Spleen (tissue), 13 donors: ENCODE measurements at regions of chr15 and their contacts with region 1.

Region 1: GRCh38 chr15:85296615-85297402 is 83.6 kb upstream of the AKAP13 start:
- DNase-seq: peak; percentile 81
- H3K4me3 ChIP-seq: peak overlapping the region in 1 of 8 donors; percentile 50
- H3K27ac ChIP-seq: peak overlapping the region in 2 of 8 donors; percentile 14 to 37
- H3K4me1 ChIP-seq: peaks cover 0 to 12% (median 10%) of the 10 kb centered on the region in 6 donors
- H3K27me3 ChIP-seq: no peaks in the 10 kb centered on the region
- CTCF ChIP-seq: peak; percentile 32 to 81 (median 71)
- POLR2A ChIP-seq: no peak

Region 2: GRCh38 chr15:85504749-85505676 is 208.2 kb after region 1 on chr15:
- intact Hi-C with region 1: loop called (anchors 10 kb)
- DNase-seq: no peak
- H3K4me3 ChIP-seq: no peak overlapping the region
- H3K27ac ChIP-seq: peak overlapping the region in 1 of 8 donors; percentile 22
- H3K4me1 ChIP-seq: peaks cover 0 to 63% (median 15%) of the 10 kb centered on the region in 6 donors
- H3K27me3 ChIP-seq: no peaks in the 10 kb centered on the region
- CTCF ChIP-seq: peak in 10 of 11 experiments; percentile 24 to 68 (median 56)
- POLR2A ChIP-seq: no peak